Left ventricle myocardium superior (tissue), 1 donor: ENCODE measurements at regions of chr15 and their contacts with region 1.

Region 1: GRCh38 chr15:26864664-26865191 is 2.1 kb upstream of the GABRA5 start:
- DNase-seq: no peak
- ATAC-seq: peak; percentile 85

Region 2: GRCh38 chr15:26179906-26180305 is 684.8 kb before region 1 on chr15:
- intact Hi-C with region 1: loop called (anchors 5 kb)
- DNase-seq: peak; percentile 36
- ATAC-seq: peak; percentile 62